Right cardiac atrium (tissue), 5 donors: ENCODE measurements at regions of chr1 and their contacts with region 1.

Region 1: GRCh38 chr1:94255476-94255875 is 18.1 kb upstream of the ARHGAP29 start:
- DNase-seq: no peak
- ATAC-seq: peak in 1 of 2 donors; percentile 57
- H3K4me3 ChIP-seq: no peak overlapping the region
- H3K27ac ChIP-seq: no peak overlapping the region
- H3K4me1 ChIP-seq: peaks cover 2% of the 10 kb centered on the region
- H3K27me3 ChIP-seq: no peaks in the 10 kb centered on the region

Region 2: GRCh38 chr1:94275083-94275482 is 19.6 kb after region 1 on chr1:
- intact Hi-C with region 1: loop called in 1 of 4 experiments (anchors 2 kb)
- DNase-seq: no peak
- ATAC-seq: no peak
- H3K4me3 ChIP-seq: no peak overlapping the region
- H3K27ac ChIP-seq: no peak overlapping the region
- H3K4me1 ChIP-seq: peaks cover 3% of the 10 kb centered on the region
- H3K27me3 ChIP-seq: no peaks in the 10 kb centered on the region

Region 3: GRCh38 chr1:94382201-94382600 is 126.7 kb after region 1 on chr1:
- intact Hi-C with region 1: no loop called
- DNase-seq: peak in 1 of 3 donors; percentile 18
- ATAC-seq: no peak
- H3K4me3 ChIP-seq: no peak overlapping the region
- H3K27ac ChIP-seq: no peak overlapping the region
- H3K4me1 ChIP-seq: peaks cover 2% of the 10 kb centered on the region
- H3K27me3 ChIP-seq: no peaks in the 10 kb centered on the region